CD8-positive, alpha-beta T cell (primary cell): ENCODE measurements at regions of chr12 and their contacts with region 1.

Region 1: DNA sequence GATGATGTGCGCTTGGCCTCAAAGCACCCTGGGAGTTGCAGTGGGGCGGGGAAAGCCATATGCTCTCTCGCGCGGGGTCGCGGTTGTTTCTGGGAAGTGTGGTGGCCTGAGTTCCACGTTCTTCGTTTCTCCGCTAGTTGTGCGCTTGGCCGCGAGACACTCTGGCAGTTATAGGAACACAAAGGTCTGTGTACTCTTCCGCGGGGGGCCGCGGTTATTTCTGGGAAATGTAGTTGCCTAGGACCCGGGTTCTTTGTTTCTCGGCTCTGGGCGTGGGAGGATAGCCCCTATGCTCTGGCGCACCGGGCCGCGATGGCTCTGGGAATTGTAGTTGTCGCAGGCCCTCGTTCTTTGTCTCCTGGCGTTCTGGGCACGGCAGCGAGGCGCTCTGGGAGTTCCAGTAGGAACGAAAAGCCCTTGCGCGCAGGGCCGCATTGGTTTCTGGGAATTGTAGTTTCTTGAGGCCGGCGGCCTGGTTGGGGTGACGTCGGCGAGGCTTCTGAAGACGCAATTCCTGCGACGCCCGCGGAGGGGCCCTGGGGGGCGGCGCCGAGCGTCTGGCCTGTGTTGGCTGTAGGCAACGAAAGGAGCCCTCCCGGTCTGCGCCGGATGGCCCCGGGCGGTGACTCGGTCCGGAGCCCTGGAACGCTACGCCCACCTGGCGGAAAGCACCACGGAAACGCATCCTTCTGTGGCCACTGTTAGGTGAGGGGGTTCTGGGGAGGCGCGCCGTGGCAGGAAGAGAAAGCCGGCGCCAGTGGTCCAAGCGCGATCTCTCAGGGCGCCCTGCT is at the start of gene ZNF140:
- DNase-seq: peak; percentile 87 to 98 (median 94)
- ATAC-seq: peak; percentile 57
- H3K4me3 ChIP-seq: peak within 1 kb of the TSS; percentile 87 to 92
- H3K4me3 Mint-ChIP-seq: no peak within 1 kb of the TSS
- H3K27ac ChIP-seq: peak within 1 kb of the TSS; percentile 98 to 99
- H3K27ac Mint-ChIP-seq: no peak within 1 kb of the TSS
- H3K4me1 ChIP-seq: peaks cover 15% of the 10 kb centered on the region
- H3K4me1 Mint-ChIP-seq: peaks cover 17% of the 10 kb centered on the region
- H3K27me3 ChIP-seq: no peaks in the 10 kb centered on the region
- H3K27me3 Mint-ChIP-seq: no peaks in the 10 kb centered on the region
- CTCF ChIP-seq: peak; percentile 33
- total RNA-seq, gene ZNF140: 9.1 to 9.4 TPM

Region 2: GRCh38 chr12:132734206-132734605 is 346.4 kb before region 1 on chr12:
- CTCF ChIA-PET with region 1: no interaction called
- POLR2A ChIA-PET with region 1: no interaction called
- intact Hi-C with region 1: no loop called
- DNase-seq: no peak
- ATAC-seq: no peak
- H3K4me3 ChIP-seq: no peak overlapping the region
- H3K4me3 Mint-ChIP-seq: no peak overlapping the region
- H3K27ac ChIP-seq: no peak overlapping the region
- H3K27ac Mint-ChIP-seq: no peak overlapping the region
- H3K4me1 ChIP-seq: no peaks in the 10 kb centered on the region
- H3K4me1 Mint-ChIP-seq: peaks cover 2% of the 10 kb centered on the region
- H3K27me3 ChIP-seq: no peaks in the 10 kb centered on the region
- H3K27me3 Mint-ChIP-seq: no peaks in the 10 kb centered on the region
- CTCF ChIP-seq: no peak

Region 3: GRCh38 chr12:133037207-133038005 is 43.2 kb before region 1 on chr12 and contains the start of gene ZNF84:
- CTCF ChIA-PET with region 1: no interaction called
- POLR2A ChIA-PET with region 1: interaction called, 7 read pairs
- intact Hi-C with region 1: loop called (anchors 1 kb)
- DNase-seq: peak; percentile 94 to 99 (median 96)
- ATAC-seq: peak; percentile 97
- H3K4me3 ChIP-seq: peak within 1 kb of the TSS; percentile 62 to 69
- H3K4me3 Mint-ChIP-seq: peak within 1 kb of the TSS; percentile 93
- H3K27ac ChIP-seq: peak within 1 kb of the TSS; percentile 78 to 89
- H3K27ac Mint-ChIP-seq: peak within 1 kb of the TSS; percentile 92
- H3K4me1 ChIP-seq: peaks cover 4% of the 10 kb centered on the region
- H3K4me1 Mint-ChIP-seq: peaks cover 20% of the 10 kb centered on the region
- H3K27me3 ChIP-seq: no peaks in the 10 kb centered on the region
- H3K27me3 Mint-ChIP-seq: no peaks in the 10 kb centered on the region
- CTCF ChIP-seq: no peak
- total RNA-seq, gene ZNF84: 26.8 to 27.2 TPM